ENCODE measurements at regions of chr2 and their contacts with region 1.

Region 1: DNA sequence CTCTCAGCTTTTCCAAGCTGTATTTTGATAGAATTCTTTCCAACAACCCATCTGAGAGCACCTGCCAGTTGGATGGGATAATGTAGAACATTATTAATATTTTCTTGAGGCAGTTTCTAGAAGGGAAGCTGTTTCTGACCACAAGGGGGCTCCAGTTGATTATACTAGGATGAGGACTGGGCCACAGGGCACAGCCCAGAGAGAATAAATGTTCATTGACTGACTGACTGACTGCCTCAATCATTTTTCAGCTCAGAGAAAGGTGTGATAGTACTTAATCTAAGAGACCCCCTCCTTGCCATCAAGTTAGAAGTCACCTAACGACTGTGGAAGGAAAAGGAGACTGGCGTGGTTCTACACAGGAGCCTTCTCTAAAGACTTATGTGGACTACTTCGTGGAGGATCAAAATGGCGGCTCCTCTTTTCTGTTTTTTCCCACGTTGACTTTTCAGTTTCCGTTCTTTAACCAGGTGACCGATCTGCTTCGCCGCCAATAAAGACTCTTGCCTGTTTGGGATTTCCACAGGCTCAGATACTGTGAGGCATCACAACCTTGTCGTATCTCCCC is 31.9 kb upstream of the CREG2 start:
- DNase-seq: peak in 3 of 5 donors; percentile 38 to 68 (median 53)
- H3K4me3 ChIP-seq: no peak overlapping the region
- H3K27ac ChIP-seq: no peak overlapping the region
- H3K4me1 ChIP-seq: no peaks in the 10 kb centered on the region
- H3K27me3 ChIP-seq: no peaks in the 10 kb centered on the region
- CTCF ChIP-seq: peak; percentile 55

Region 2: DNA sequence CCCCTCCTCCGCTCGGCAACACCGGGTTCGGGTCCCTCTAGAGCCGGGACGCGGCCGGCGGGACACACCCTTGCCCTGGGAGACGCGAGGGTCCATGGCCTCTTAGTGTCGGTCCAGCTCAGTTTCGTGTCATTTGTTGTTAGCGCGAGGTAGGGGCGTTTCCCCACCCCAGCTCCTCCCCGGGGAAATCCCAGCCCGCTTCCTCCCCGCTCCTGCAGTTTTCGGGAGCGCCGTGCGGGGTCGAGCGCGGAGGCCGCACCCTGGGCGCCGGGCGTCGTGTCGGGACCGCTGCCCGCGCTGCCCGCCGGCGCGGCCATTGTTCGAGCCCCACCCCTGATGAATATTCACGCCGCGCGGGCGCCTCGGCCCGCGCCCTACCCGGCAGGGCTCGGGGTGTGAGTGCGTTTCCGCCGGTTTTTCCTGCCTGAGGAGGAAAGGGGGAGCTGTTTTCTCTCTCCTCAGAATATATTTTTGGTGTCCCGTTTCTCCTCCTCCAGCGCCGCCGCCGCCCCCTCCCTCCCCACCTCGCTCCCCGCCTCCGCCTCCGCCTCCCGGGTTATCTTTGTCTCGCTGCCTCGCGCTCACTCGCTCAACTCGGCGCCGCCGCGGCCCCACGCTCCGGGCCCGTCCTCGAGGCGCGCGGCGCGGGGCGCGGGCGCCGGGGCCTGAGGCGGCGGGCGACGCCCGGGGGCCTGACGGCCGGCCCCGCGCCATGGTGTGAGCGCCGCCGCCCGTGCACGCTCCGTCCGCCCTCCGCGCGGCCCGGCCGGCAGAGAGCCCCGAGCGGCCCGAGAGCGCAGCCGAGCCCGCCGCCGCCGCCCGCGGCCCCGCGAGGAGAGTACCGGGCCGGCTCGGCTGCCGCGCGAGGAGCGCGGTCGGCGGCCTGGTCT is 278.2 kb after region 1 on chr2 and contains the start of gene MAP4K4:
- intact Hi-C with region 1: no loop called
- DNase-seq: peak; percentile 81 to 94 (median 89)
- H3K4me3 ChIP-seq: peak within 1 kb of the TSS; percentile 81 to 84 (median 82)
- H3K27ac ChIP-seq: peak within 1 kb of the TSS; percentile 40 to 70
- H3K4me1 ChIP-seq: peaks cover 0 to 9% (median 7%) of the 10 kb centered on the region in 3 donors
- H3K27me3 ChIP-seq: no peaks in the 10 kb centered on the region
- CTCF ChIP-seq: no peak
- total RNA-seq, gene MAP4K4: 62.8 TPM

Region 3: GRCh38 chr2:101831351-101831865 is 412.2 kb after region 1 on chr2:
- intact Hi-C with region 1: loop called (anchors 10 kb)
- DNase-seq: peak; percentile 67 to 86 (median 72)
- H3K4me3 ChIP-seq: no peak overlapping the region
- H3K27ac ChIP-seq: peak overlapping the region in 1 of 2 donors; percentile 71
- H3K4me1 ChIP-seq: peaks cover 0 to 3% (median 0%) of the 10 kb centered on the region in 3 donors
- H3K27me3 ChIP-seq: no peaks in the 10 kb centered on the region
- CTCF ChIP-seq: peak; percentile 71